Activated CD4-positive, alpha-beta memory T cell treated with anti-CD3 and anti-CD28 coated beads for 36 hours (primary cell): ENCODE measurements at regions of chr10 and their contacts with region 1.

Region 1: DNA sequence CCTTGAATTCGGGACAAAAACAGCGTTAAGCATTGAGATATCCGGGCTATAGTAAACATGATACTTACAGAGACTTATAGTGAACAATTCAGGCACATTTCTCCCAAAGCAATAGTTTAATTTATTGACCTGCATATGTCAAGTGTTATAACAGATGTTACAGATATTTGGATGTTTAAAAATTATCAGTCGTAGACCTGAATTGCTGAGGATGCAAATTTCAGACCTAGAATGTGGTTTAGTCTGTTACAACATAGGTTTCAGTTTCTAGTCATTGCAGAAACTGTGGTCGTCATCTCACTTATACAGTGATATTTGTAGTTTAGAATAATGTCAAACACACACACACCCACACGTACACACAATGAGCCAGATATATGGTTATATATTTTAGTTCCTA is 85.2 kb downstream of the VTI1A start:
- DNase-seq: peak; percentile 12
- H3K4me3 Mint-ChIP-seq: peak overlapping the region; percentile 39
- H3K27ac Mint-ChIP-seq: no peak overlapping the region
- H3K4me1 Mint-ChIP-seq: peaks cover 27% of the 10 kb centered on the region
- H3K27me3 Mint-ChIP-seq: peaks cover 2% of the 10 kb centered on the region

Region 2: DNA sequence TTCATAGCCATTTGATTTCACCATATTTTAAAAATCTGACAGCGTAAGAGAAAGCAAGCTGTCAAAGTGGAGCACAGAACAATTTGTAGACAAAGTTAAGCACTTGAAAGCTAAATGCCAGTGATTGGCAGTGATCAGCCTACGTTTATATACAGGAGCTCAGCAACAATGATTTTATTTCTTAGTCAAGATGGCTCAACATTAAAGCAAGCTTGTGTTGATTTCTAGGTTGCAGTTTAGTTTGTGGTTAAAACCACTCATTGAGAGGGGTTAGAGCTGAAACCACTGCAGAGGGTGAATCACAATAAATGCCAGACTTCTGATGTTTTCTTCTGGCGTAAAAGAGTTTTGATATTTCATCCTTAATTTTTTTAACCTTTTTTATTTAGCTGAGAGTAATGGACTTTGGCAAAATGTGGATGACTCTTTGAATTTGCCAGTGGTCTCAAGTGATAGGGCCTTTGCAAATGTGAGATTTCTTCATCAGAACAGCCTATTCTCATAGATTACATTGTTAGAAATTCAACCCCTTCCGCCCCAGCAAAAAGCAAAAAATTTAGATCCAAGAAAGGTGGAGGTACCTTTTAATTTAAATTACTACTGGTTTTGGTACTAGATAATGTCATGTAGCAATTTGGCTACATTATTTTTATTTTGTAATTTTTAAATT is 1539.0 kb before region 1 on chr10:
- CTCF ChIA-PET with region 1: no interaction called
- POLR2A ChIA-PET with region 1: no interaction called
- intact Hi-C with region 1: loop called (anchors 2 kb)
- DNase-seq: no peak
- H3K4me3 Mint-ChIP-seq: no peak overlapping the region
- H3K27ac Mint-ChIP-seq: no peak overlapping the region
- H3K4me1 Mint-ChIP-seq: peaks cover 28% of the 10 kb centered on the region
- H3K27me3 Mint-ChIP-seq: no peaks in the 10 kb centered on the region

Region 3: GRCh38 chr10:112389147-112389822 is 142.9 kb before region 1 on chr10:
- CTCF ChIA-PET with region 1: no interaction called
- POLR2A ChIA-PET with region 1: no interaction called
- intact Hi-C with region 1: loop called (anchors 1 kb)
- DNase-seq: peak; percentile 80
- H3K4me3 Mint-ChIP-seq: peak overlapping the region; percentile 1
- H3K27ac Mint-ChIP-seq: peak overlapping the region; percentile 88
- H3K4me1 Mint-ChIP-seq: peaks cover 58% of the 10 kb centered on the region
- H3K27me3 Mint-ChIP-seq: no peaks in the 10 kb centered on the region

Region 4: GRCh38 chr10:112421479-112422130 is 110.6 kb before region 1 on chr10:
- CTCF ChIA-PET with region 1: no interaction called
- POLR2A ChIA-PET with region 1: no interaction called
- intact Hi-C with region 1: no loop called
- DNase-seq: no peak
- H3K4me3 Mint-ChIP-seq: no peak overlapping the region
- H3K27ac Mint-ChIP-seq: no peak overlapping the region
- H3K4me1 Mint-ChIP-seq: no peaks in the 10 kb centered on the region
- H3K27me3 Mint-ChIP-seq: no peaks in the 10 kb centered on the region

Region 5: GRCh38 chr10:112519129-112519761 is 12.9 kb before region 1 on chr10:
- CTCF ChIA-PET with region 1: interaction called, 7 read pairs
- POLR2A ChIA-PET with region 1: interaction called, 4 read pairs
- intact Hi-C with region 1: loop called (anchors 1 kb)
- DNase-seq: peak; percentile 37
- H3K4me3 Mint-ChIP-seq: no peak overlapping the region
- H3K27ac Mint-ChIP-seq: no peak overlapping the region
- H3K4me1 Mint-ChIP-seq: peaks cover 9% of the 10 kb centered on the region
- H3K27me3 Mint-ChIP-seq: no peaks in the 10 kb centered on the region